Activated CD4-positive, alpha-beta T cell treated with anti-CD3 and anti-CD28 coated beads for 36 hours (primary cell): ENCODE measurements at regions of chr9 and their contacts with region 1.

Region 1: GRCh38 chr9:130940693-130941576 is 1.9 kb upstream of the FIBCD1 start:
- DNase-seq: peak; percentile 88
- ATAC-seq: peak; percentile 86
- H3K4me3 Mint-ChIP-seq: no peak overlapping the region
- H3K27ac Mint-ChIP-seq: no peak overlapping the region
- H3K4me1 Mint-ChIP-seq: peaks cover 9% of the 10 kb centered on the region
- H3K27me3 Mint-ChIP-seq: peaks cover 38% of the 10 kb centered on the region

Region 2: GRCh38 chr9:130770679-130771442 is 170.1 kb before region 1 on chr9:
- CTCF ChIA-PET with region 1: no interaction called
- POLR2A ChIA-PET with region 1: no interaction called
- intact Hi-C with region 1: loop called (anchors 1 to 2 kb)
- DNase-seq: no peak
- ATAC-seq: peak; percentile 73
- H3K4me3 Mint-ChIP-seq: no peak overlapping the region
- H3K27ac Mint-ChIP-seq: no peak overlapping the region
- H3K4me1 Mint-ChIP-seq: peaks cover 23% of the 10 kb centered on the region
- H3K27me3 Mint-ChIP-seq: no peaks in the 10 kb centered on the region

Region 3: GRCh38 chr9:131227112-131227958 is 286.4 kb after region 1 on chr9:
- CTCF ChIA-PET with region 1: no interaction called
- POLR2A ChIA-PET with region 1: no interaction called
- intact Hi-C with region 1: no loop called
- DNase-seq: no peak
- ATAC-seq: no peak
- H3K4me3 Mint-ChIP-seq: no peak overlapping the region
- H3K27ac Mint-ChIP-seq: no peak overlapping the region
- H3K4me1 Mint-ChIP-seq: no peaks in the 10 kb centered on the region
- H3K27me3 Mint-ChIP-seq: no peaks in the 10 kb centered on the region